ENCODE measurements at regions of chr19 and their contacts with region 1.

Region 1: GRCh38 chr19:43765109-43765876 is 10.5 kb upstream of the SMG9 start:
- DNase-seq: peak in 13 of 14 experiments; percentile 45 to 87 (median 61)
- ATAC-seq: peak; percentile 81
- H3K4me3 ChIP-seq: no peak overlapping the region
- H3K4me3 Mint-ChIP-seq: peak overlapping the region; percentile 44
- H3K27ac ChIP-seq: peak overlapping the region; percentile 48 to 79
- H3K27ac Mint-ChIP-seq: peak overlapping the region; percentile 86
- H3K4me1 ChIP-seq: peaks cover 45% of the 10 kb centered on the region
- H3K4me1 Mint-ChIP-seq: peaks cover 26% of the 10 kb centered on the region
- H3K27me3 ChIP-seq: no peaks in the 10 kb centered on the region
- H3K27me3 Mint-ChIP-seq: no peaks in the 10 kb centered on the region
- CTCF ChIP-seq: no peak

Region 2: DNA sequence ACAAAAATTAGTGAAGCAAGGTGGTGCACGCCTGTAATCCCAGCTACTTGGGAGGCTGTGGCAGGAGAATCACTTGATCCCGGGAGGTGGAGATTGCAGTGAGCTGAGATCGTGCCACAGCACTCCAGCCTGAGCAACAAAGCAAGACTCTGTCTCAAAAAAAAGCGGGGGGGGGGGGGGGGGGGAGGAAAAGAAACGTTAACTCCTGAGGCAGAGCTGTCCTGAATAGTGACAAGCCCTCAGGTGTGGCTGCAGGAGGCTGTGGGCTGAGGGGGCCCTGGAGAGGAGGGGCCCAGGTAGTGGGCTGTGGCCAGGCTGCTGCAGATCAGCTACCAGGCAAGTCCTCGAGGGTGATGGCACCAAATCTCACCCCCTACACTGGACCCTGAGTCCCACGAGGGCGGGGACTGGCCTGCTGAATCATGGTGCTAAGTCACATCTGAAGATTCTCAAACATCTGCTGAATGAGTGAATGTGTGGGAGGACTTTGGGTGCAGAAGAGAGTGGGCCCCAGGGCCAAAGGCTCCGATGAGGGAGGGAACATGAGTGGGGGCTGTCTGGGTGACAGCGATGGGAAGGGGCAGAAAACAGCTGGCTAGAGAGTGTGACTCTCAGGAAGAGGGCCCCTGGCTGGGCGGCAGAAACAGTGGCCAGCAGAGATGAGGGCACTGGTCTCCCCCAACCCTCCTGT is 1746.6 kb before region 1 on chr19:
- CTCF ChIA-PET with region 1: no interaction called
- POLR2A ChIA-PET with region 1: no interaction called
- intact Hi-C with region 1: no loop called
- DNase-seq: no peak
- ATAC-seq: no peak
- H3K4me3 ChIP-seq: no peak overlapping the region
- H3K4me3 Mint-ChIP-seq: no peak overlapping the region
- H3K27ac ChIP-seq: no peak overlapping the region
- H3K27ac Mint-ChIP-seq: no peak overlapping the region
- H3K4me1 ChIP-seq: no peaks in the 10 kb centered on the region
- H3K4me1 Mint-ChIP-seq: no peaks in the 10 kb centered on the region
- H3K27me3 ChIP-seq: no peaks in the 10 kb centered on the region
- H3K27me3 Mint-ChIP-seq: peaks cover 3% of the 10 kb centered on the region
- CTCF ChIP-seq: no peak

Region 3: GRCh38 chr19:43754503-43755255 is 10.6 kb before region 1 on chr19 and contains the start of gene SMG9:
- CTCF ChIA-PET with region 1: interaction called, 9 read pairs
- POLR2A ChIA-PET with region 1: interaction called, 47 read pairs
- intact Hi-C with region 1: loop called in 1 of 2 experiments (anchors 1 kb)
- DNase-seq: peak; percentile 96 to 100 (median 98)
- ATAC-seq: peak; percentile 79
- H3K4me3 ChIP-seq: peak within 1 kb of the TSS; percentile 95
- H3K4me3 Mint-ChIP-seq: peak within 1 kb of the TSS; percentile 98
- H3K27ac ChIP-seq: peak within 1 kb of the TSS; percentile 97 to 99
- H3K27ac Mint-ChIP-seq: peak within 1 kb of the TSS; percentile 95
- H3K4me1 ChIP-seq: peaks cover 42% of the 10 kb centered on the region
- H3K4me1 Mint-ChIP-seq: peaks cover 43% of the 10 kb centered on the region
- H3K27me3 ChIP-seq: no peaks in the 10 kb centered on the region
- H3K27me3 Mint-ChIP-seq: no peaks in the 10 kb centered on the region
- CTCF ChIP-seq: no peak
- total RNA-seq, gene SMG9: 34.7 to 38.2 TPM

Region 4: GRCh38 chr19:43777163-43777700 is 11.9 kb after region 1 on chr19:
- CTCF ChIA-PET with region 1: interaction called, 45 read pairs
- POLR2A ChIA-PET with region 1: interaction called, 17 read pairs
- intact Hi-C with region 1: no loop called
- DNase-seq: peak in 11 of 14 experiments; percentile 17 to 82 (median 52)
- ATAC-seq: peak; percentile 67
- H3K4me3 ChIP-seq: peak overlapping the region; percentile 14
- H3K4me3 Mint-ChIP-seq: peak overlapping the region; percentile 82
- H3K27ac ChIP-seq: peak overlapping the region; percentile 42 to 48
- H3K27ac Mint-ChIP-seq: peak overlapping the region; percentile 90
- H3K4me1 ChIP-seq: peaks cover 73% of the 10 kb centered on the region
- H3K4me1 Mint-ChIP-seq: peaks cover 67% of the 10 kb centered on the region
- H3K27me3 ChIP-seq: no peaks in the 10 kb centered on the region
- H3K27me3 Mint-ChIP-seq: no peaks in the 10 kb centered on the region
- CTCF ChIP-seq: no peak

Region 5: GRCh38 chr19:43784981-43785808 is 19.9 kb after region 1 on chr19:
- CTCF ChIA-PET with region 1: interaction called, 45 read pairs
- POLR2A ChIA-PET with region 1: interaction called, 12 read pairs
- intact Hi-C with region 1: loop called (anchors 1 to 2 kb)
- DNase-seq: peak in 11 of 14 experiments; percentile 21 to 83 (median 41)
- ATAC-seq: peak; percentile 51
- H3K4me3 ChIP-seq: peak overlapping the region; percentile 3
- H3K4me3 Mint-ChIP-seq: peak overlapping the region; percentile 71
- H3K27ac ChIP-seq: peak overlapping the region; percentile 70 to 75
- H3K27ac Mint-ChIP-seq: peak overlapping the region; percentile 90
- H3K4me1 ChIP-seq: peaks cover 50% of the 10 kb centered on the region
- H3K4me1 Mint-ChIP-seq: peaks cover 45% of the 10 kb centered on the region
- H3K27me3 ChIP-seq: no peaks in the 10 kb centered on the region
- H3K27me3 Mint-ChIP-seq: peaks cover 5% of the 10 kb centered on the region
- CTCF ChIP-seq: peak; percentile 95

Measured in CD4-positive, alpha-beta T cell (primary cell).